ENCODE measurements at regions of chr14 and their contacts with region 1.

Region 1: DNA sequence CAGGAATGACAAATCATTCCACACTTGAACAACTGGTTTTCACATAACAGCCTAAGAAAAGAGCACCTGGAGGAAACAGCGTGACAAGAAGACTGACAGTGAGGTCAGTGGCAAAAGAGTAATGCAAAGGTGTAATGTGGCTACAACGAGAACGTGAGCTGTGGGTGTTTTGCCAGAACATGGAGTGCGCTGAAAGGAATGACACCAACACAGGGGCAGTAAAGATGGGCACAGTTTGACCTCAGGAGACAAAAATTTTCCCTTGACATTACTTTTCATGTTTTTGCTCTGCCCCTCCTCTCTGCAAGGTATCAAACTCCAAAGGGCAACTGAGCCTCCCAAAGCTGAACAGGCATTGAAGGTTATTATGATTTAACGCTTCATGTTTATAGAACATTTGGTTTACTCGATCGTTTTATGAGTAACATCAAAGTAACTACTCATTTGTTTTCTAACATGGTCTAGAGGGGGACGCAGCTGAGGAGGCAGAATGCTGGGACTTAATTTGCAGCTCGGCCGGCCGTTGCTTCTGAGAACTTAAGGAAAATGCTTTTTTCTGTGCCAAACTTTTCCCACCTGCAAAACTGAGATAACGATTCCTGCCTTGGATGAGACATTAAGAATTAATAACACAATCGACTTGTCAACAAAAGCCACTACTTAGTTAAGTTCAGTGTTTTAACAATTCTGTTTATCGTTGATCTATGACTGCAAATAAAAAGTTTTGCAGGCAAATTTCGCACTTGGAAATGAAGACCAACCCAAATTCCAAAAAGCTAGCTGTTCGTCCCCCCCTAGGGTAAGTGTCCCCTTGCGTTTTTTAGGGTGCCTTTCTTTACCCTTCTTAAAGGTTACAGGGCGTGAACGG is 954 bp downstream of the HAUS4 start:
- DNase-seq: no peak
- ATAC-seq: no peak
- H3K4me3 ChIP-seq: peak overlapping the region; percentile 58 to 97 (median 84)
- H3K4me3 Mint-ChIP-seq: peak overlapping the region; percentile 93
- H3K27ac ChIP-seq: peak overlapping the region; percentile 76
- H3K27ac Mint-ChIP-seq: peak overlapping the region; percentile 89
- H3K4me1 ChIP-seq: peaks cover 11 to 16% of the 10 kb centered on the region in 2 donors
- H3K4me1 Mint-ChIP-seq: peaks cover 21% of the 10 kb centered on the region
- H3K27me3 ChIP-seq: no peaks in the 10 kb centered on the region
- H3K27me3 Mint-ChIP-seq: no peaks in the 10 kb centered on the region
- CTCF ChIP-seq: no peak

Region 2: GRCh38 chr14:22918804-22919600 is 36.9 kb before region 1 on chr14 and contains the start of gene RBM23:
- CTCF ChIA-PET with region 1: interaction called, 4 read pairs
- POLR2A ChIA-PET with region 1: interaction called, 7 read pairs
- intact Hi-C with region 1: loop called (anchors 1 kb)
- DNase-seq: peak; percentile 100
- ATAC-seq: peak; percentile 87
- H3K4me3 ChIP-seq: peak within 1 kb of the TSS; percentile 72 to 98 (median 96)
- H3K4me3 Mint-ChIP-seq: peak within 1 kb of the TSS; percentile 93
- H3K27ac ChIP-seq: peak within 1 kb of the TSS; percentile 98 to 99
- H3K27ac Mint-ChIP-seq: peak within 1 kb of the TSS; percentile 99
- H3K4me1 ChIP-seq: peaks cover 16 to 28% of the 10 kb centered on the region in 2 donors
- H3K4me1 Mint-ChIP-seq: peaks cover 38% of the 10 kb centered on the region
- H3K27me3 ChIP-seq: no peaks in the 10 kb centered on the region
- H3K27me3 Mint-ChIP-seq: no peaks in the 10 kb centered on the region
- CTCF ChIP-seq: no peak
- total RNA-seq, gene RBM23: 165 and 188 TPM in 2 replicates

Region 3: DNA sequence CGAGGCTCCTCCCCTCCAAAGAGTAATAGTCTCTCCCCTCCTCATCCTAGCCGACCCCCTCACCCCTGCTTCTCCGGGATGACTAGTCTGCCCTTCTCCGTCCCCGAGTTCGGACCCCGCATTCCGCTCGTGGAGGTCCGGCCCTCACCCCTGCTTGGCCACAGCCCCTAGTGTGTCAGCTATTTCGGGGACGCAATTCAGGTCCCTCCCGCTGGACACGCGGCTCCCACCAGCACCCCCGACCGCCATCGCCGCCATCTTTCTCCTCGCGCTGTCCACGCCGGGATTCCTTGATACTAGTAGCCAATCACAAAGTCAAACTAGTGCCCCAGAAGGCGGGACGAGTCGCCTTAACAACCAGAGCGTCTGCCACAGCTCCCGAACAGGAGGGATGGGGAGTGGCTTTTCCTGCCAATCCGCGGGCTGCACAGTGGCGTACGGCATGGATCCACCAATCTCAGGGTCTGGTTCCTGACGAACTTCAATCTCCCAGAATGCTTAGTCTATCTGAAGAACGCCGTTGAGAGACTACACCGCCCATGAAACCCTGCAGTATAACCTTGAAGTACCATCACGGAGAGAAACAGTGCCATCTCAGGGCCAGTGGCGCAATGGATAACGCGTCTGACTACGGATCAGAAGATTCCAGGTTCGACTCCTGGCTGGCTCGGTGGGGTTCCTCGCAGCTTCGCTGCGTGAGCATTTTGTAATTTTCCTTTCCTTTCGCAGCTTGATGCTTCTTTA is 26.7 kb before region 1 on chr14 and contains the start of gene PRMT5:
- CTCF ChIA-PET with region 1: interaction called, 20 read pairs
- POLR2A ChIA-PET with region 1: interaction called, 3 read pairs
- intact Hi-C with region 1: loop called (anchors 2 kb)
- DNase-seq: peak; percentile 100
- ATAC-seq: peak; percentile 94
- H3K4me3 ChIP-seq: peak within 1 kb of the TSS; percentile 64 to 100 (median 96)
- H3K4me3 Mint-ChIP-seq: no peak within 1 kb of the TSS
- H3K27ac ChIP-seq: peak within 1 kb of the TSS; percentile 65 to 86
- H3K27ac Mint-ChIP-seq: no peak within 1 kb of the TSS
- H3K4me1 ChIP-seq: peaks cover 13 to 23% of the 10 kb centered on the region in 2 donors
- H3K4me1 Mint-ChIP-seq: peaks cover 26% of the 10 kb centered on the region
- H3K27me3 ChIP-seq: no peaks in the 10 kb centered on the region
- H3K27me3 Mint-ChIP-seq: no peaks in the 10 kb centered on the region
- CTCF ChIP-seq: no peak
- total RNA-seq, gene PRMT5: 38.8 and 48.6 TPM in 2 replicates

Region 4: GRCh38 chr14:22973217-22974032 is 17.5 kb after region 1 on chr14:
- CTCF ChIA-PET with region 1: interaction called, 38 read pairs
- POLR2A ChIA-PET with region 1: interaction called, 3 read pairs
- intact Hi-C with region 1: no loop called
- DNase-seq: peak; percentile 69
- ATAC-seq: peak; percentile 54
- H3K4me3 ChIP-seq: no peak overlapping the region
- H3K4me3 Mint-ChIP-seq: no peak overlapping the region
- H3K27ac ChIP-seq: no peak overlapping the region
- H3K27ac Mint-ChIP-seq: no peak overlapping the region
- H3K4me1 ChIP-seq: peaks cover 0 to 5% of the 10 kb centered on the region in 2 donors
- H3K4me1 Mint-ChIP-seq: peaks cover 4% of the 10 kb centered on the region
- H3K27me3 ChIP-seq: peaks cover 0 to 5% (median 2%) of the 10 kb centered on the region in 4 experiments
- H3K27me3 Mint-ChIP-seq: peaks cover 15% of the 10 kb centered on the region
- CTCF ChIP-seq: peak; percentile 79

Region 5: DNA sequence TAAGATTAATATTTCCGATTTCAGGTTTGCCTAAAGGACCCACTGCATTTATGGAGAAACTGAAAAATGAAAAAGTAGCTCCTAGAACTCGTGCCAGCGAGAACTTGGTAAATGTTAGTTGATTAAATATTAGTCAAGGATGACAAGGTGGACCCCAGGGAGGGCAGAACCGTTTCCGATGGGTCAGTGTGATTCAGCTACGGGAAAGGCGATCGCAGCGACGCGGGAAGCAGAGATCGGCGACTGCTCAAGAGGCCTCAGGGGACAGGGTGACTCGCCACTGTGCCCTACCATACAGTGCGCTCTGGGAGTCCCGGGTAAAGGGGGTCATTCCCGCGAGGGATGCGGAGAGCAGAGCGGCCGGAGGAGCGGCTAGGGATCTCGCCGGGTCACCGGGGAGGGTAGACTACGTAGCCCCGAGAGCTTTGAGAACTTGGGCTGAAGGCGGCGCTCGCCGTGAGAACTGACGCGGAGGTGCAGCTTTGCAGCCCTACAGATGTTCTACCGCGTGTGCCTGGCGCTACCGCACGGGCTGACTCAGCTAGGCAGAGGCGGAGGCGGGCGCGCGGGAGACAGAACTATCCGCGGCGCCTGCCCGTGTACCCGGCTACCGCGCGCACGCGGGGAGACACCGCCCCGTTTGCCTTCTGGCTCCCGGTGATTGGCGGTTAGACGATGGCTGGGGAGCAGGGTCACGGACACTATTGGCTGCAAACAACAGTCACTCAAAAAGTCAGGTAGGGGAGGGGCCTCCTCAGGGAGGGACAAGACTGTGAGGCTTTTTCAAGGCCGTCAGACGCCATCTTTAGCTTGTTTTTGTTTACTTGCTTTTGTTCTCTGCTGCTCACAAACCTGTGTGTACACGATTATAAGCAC is 50.8 kb after region 1 on chr14:
- CTCF ChIA-PET with region 1: interaction called, 11 read pairs
- POLR2A ChIA-PET with region 1: no interaction called
- intact Hi-C with region 1: loop called (anchors 2 kb)
- DNase-seq: peak; percentile 98
- ATAC-seq: peak; percentile 91
- H3K4me3 ChIP-seq: peak overlapping the region; percentile 70 to 95 (median 85)
- H3K4me3 Mint-ChIP-seq: peak overlapping the region; percentile 99
- H3K27ac ChIP-seq: peak overlapping the region; percentile 75 to 88
- H3K27ac Mint-ChIP-seq: peak overlapping the region; percentile 98
- H3K4me1 ChIP-seq: peaks cover 24 to 32% of the 10 kb centered on the region in 2 donors
- H3K4me1 Mint-ChIP-seq: peaks cover 42% of the 10 kb centered on the region
- H3K27me3 ChIP-seq: no peaks in the 10 kb centered on the region
- H3K27me3 Mint-ChIP-seq: no peaks in the 10 kb centered on the region
- CTCF ChIP-seq: no peak

Region 6: DNA sequence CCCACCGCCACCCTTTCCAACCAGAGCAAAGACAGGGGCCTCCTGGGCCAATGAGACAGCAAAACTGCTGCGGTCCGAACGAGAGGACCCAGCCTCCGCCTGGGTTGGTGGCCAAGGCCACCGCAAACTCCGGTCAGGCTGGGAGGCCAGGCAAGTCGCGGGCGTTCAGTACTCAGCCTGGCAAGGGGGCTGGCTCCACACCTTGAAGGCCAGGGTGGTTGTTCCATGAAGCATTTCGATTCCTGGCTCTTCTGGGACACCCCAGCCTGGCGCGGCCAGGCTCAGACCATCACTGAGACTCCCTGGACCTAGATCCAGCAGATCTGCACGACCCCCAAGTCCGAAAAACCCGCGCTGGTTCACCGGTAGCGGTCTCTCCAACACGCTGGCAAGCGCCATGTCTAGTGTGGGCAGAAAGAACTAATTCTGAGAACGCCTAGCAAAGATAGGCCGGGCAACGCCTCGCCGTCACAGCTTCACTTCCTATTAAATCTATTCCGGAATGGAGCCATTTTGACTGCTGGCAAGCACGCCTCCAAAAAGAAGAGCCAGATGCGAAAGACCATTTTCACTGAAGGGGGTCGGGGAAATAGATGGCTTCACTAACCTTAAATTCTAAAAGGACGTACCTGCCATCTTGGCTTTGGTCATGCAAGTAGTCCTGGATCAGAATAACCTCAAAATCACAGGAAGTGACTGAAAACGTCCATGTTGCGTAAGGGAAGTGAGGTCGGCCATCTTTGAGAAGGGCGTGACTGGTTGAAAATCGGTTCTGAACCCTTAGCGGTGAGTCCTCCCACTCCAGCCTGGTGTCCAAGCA is 78.8 kb after region 1 on chr14 and contains the start of gene PSMB5:
- CTCF ChIA-PET with region 1: no interaction called
- POLR2A ChIA-PET with region 1: interaction called, 3 read pairs
- intact Hi-C with region 1: loop called (anchors 1 kb)
- DNase-seq: peak; percentile 96
- ATAC-seq: peak; percentile 92
- H3K4me3 ChIP-seq: peak within 1 kb of the TSS; percentile 62 to 100 (median 66)
- H3K4me3 Mint-ChIP-seq: peak within 1 kb of the TSS; percentile 86
- H3K27ac ChIP-seq: peak within 1 kb of the TSS; percentile 81 to 93
- H3K27ac Mint-ChIP-seq: peak within 1 kb of the TSS; percentile 93
- H3K4me1 ChIP-seq: peaks cover 14 to 20% of the 10 kb centered on the region in 2 donors
- H3K4me1 Mint-ChIP-seq: peaks cover 28% of the 10 kb centered on the region
- H3K27me3 ChIP-seq: no peaks in the 10 kb centered on the region
- H3K27me3 Mint-ChIP-seq: no peaks in the 10 kb centered on the region
- CTCF ChIP-seq: no peak
- total RNA-seq, gene PSMB5: 29.0 and 31.9 TPM in 2 replicates

Region 7: DNA sequence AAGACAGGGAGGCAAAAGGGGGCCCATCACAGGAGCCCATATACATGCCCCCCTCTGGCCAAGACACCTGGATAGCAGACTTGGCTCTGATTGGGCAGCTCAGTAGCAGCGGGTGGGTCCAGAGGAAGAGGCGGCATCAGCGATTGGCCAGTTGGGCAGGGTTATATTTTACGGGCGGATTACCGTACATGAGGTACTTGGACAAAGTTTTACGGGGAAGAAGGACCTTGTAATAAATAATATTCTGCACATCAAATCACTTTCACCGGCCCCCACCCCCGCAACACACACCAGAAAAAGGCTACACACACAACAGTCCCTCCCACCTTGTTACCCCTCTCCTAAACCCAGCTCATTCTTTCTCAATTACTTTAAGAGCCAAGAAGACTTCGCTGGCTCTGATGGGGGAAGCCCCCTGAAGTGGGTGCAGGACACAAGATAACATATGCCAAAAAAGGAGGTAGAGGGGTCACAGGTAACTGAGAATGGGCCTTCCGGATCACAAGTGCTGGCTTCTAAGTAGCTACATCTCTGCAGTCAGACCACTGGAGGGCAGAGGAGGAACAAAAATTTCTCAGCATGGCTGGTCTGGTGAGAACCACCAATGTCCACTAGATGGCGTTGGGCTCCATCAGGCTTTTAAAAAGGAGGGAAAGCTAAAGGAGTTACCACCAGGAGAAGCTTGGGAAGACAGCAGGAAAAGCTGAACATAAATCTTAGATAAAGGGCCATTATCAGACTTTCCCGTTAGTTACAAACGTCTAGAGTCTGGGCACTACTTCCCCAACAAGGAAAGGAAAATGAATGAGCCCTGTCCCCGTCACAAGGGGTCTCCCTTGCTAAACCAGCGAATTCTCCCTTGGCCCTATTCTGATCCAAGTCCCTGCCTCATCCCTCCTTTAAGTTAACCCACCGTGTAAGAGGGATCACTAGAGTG is 112.8 kb after region 1 on chr14:
- CTCF ChIA-PET with region 1: interaction called, 10 read pairs
- POLR2A ChIA-PET with region 1: no interaction called
- intact Hi-C with region 1: no loop called
- DNase-seq: peak; percentile 87
- ATAC-seq: peak; percentile 85
- H3K4me3 ChIP-seq: no peak overlapping the region
- H3K4me3 Mint-ChIP-seq: no peak overlapping the region
- H3K27ac ChIP-seq: peak overlapping the region; percentile 10 to 28
- H3K27ac Mint-ChIP-seq: peak overlapping the region; percentile 83
- H3K4me1 ChIP-seq: peaks cover 21 to 41% of the 10 kb centered on the region in 2 donors
- H3K4me1 Mint-ChIP-seq: peaks cover 38% of the 10 kb centered on the region
- H3K27me3 ChIP-seq: no peaks in the 10 kb centered on the region
- H3K27me3 Mint-ChIP-seq: no peaks in the 10 kb centered on the region
- CTCF ChIP-seq: peak; percentile 99

Measured in B cell (primary cell).